HCT116 (cell line): ENCODE measurements at regions of chr1 and their contacts with region 1.

Region 1: DNA sequence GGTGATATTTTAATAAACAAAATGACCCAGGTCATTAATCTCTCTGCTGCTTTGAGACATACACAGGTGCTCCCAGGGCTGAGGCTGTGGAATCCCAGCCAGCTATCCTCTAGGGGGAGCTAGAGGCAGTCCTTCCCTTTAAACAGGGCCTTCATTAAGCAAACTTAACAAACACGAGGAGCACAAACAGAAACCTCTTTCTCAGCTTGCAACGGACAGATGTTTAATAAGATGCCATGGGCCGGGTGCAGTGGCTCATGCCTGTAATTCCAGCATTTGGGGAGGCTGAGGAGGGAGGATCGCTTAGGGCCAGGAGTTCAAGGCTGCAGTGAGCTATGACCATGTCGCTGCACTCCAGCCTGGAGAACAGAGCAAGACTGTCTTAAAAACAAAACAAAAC is 106.7 kb downstream of the HIVEP3 start:
- DNase-seq: peak; percentile 66
- ATAC-seq: peak; percentile 94
- H3K4me3 ChIP-seq: no peak overlapping the region
- H3K27ac ChIP-seq: no peak overlapping the region
- H3K4me1 ChIP-seq: peaks cover 7 to 17% of the 10 kb centered on the region in 2 experiments; a peak in 3 of 4 replicates
- H3K27me3 ChIP-seq: no peaks in the 10 kb centered on the region
- CTCF ChIP-seq: peak; percentile 60 to 94 (median 91); a peak in 5 of 6 replicates
- POLR2A ChIP-seq: no peak
- RAD21 ChIP-seq: peak; percentile 89

Region 2: DNA sequence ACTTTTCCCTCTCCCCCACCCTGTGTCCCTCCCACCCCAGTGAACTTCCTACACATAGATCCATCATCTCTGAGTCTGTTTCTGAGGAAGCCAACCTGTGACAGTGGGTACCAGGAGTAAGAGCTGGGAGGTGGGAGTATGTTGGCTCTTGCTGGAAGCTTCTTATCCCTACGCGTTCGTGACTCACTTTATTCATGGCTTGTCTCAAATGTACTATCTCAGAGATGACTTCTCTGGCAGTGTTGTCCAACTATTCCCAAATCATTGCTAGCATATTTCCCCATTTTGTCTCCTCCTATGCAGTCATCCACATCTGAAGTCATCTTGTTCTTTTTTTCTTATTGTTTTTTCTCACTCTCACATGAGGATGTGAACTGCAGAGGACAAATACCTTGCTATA is 18.7 kb after region 1 on chr1:
- CTCF ChIA-PET with region 1: interaction called, 12 read pairs
- POLR2A ChIA-PET with region 1: no interaction called
- RAD21 ChIA-PET with region 1: no interaction called
- intact Hi-C with region 1: no loop called
- DNase-seq: no peak
- ATAC-seq: no peak
- H3K4me3 ChIP-seq: no peak overlapping the region
- H3K27ac ChIP-seq: no peak overlapping the region
- H3K4me1 ChIP-seq: no peaks in the 10 kb centered on the region
- H3K27me3 ChIP-seq: peaks cover 3% of the 10 kb centered on the region; the same call in 1 of the 2 replicates
- CTCF ChIP-seq: no peak
- POLR2A ChIP-seq: no peak
- RAD21 ChIP-seq: no peak

Region 3: GRCh38 chr1:42035830-42036604 is 224.0 kb after region 1 on chr1:
- CTCF ChIA-PET with region 1: no interaction called
- POLR2A ChIA-PET with region 1: no interaction called
- RAD21 ChIA-PET with region 1: no interaction called
- intact Hi-C with region 1: loop called (anchors 5 kb)
- DNase-seq: peak; percentile 82
- ATAC-seq: peak; percentile 90
- H3K4me3 ChIP-seq: peak overlapping the region; percentile 62 to 81
- H3K27ac ChIP-seq: peak overlapping the region; percentile 63; the same call in 1 of the 2 replicates
- H3K4me1 ChIP-seq: peaks cover 10 to 20% of the 10 kb centered on the region in 2 experiments; a peak in 3 of 4 replicates
- H3K27me3 ChIP-seq: no peaks in the 10 kb centered on the region
- CTCF ChIP-seq: no peak
- POLR2A ChIP-seq: peak; percentile 47
- RAD21 ChIP-seq: no peak

Region 4: DNA sequence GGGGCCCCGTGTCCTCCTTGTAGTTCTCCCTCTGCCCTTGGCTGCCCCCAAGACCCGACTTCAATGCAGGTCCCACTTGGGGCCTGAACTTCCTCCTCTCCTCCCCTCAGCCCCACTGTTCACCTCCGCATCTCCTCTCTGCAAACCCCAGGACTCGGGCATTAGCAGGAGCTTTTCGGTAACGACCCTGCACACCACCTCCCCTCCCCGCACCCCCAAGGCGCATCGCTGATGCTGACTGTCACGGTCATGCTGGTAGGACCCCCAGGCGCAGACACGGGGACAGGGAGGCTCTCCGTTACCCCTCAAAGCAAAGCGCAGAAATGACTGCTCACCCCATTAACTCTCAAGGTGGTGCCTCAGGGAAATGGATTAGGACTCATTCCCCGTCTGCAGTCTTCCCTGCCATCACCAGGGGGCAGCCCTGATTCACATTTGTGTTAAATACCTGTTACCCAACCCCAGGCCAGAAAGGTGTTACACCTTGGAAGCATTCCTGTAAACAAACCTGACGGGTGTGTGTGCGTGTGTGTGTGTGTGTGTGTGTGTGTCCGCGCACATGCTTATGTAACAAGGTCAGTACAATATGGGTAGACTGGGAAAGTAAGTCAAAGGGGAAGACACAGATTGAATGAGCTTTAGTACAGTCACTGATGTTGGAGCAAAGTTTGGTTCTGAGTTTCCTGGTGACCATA is 334.7 kb after region 1 on chr1:
- CTCF ChIA-PET with region 1: interaction called, 3 read pairs
- POLR2A ChIA-PET with region 1: no interaction called
- RAD21 ChIA-PET with region 1: no interaction called
- intact Hi-C with region 1: loop called (anchors 1 kb)
- DNase-seq: peak; percentile 79
- ATAC-seq: peak; percentile 94
- H3K4me3 ChIP-seq: no peak overlapping the region
- H3K27ac ChIP-seq: no peak overlapping the region
- H3K4me1 ChIP-seq: peaks cover 0 to 8% of the 10 kb centered on the region in 2 experiments; a peak in 1 of 4 replicates
- H3K27me3 ChIP-seq: no peaks in the 10 kb centered on the region
- CTCF ChIP-seq: peak; percentile 83 to 89 (median 83)
- POLR2A ChIP-seq: no peak
- RAD21 ChIP-seq: peak; percentile 95

Region 5: GRCh38 chr1:42231253-42231652 is 419.2 kb after region 1 on chr1:
- CTCF ChIA-PET with region 1: no interaction called
- POLR2A ChIA-PET with region 1: no interaction called
- RAD21 ChIA-PET with region 1: no interaction called
- intact Hi-C with region 1: no loop called
- DNase-seq: no peak
- ATAC-seq: no peak
- H3K4me3 ChIP-seq: no peak overlapping the region
- H3K27ac ChIP-seq: no peak overlapping the region
- H3K4me1 ChIP-seq: no peaks in the 10 kb centered on the region
- H3K27me3 ChIP-seq: no peaks in the 10 kb centered on the region
- CTCF ChIP-seq: no peak
- POLR2A ChIP-seq: no peak
- RAD21 ChIP-seq: no peak